ENCODE measurements at regions of chr3 and their contacts with region 1.

Region 1: GRCh38 chr3:97764407-97765238 is at the start of gene ARL6:
- DNase-seq: peak; percentile 81
- H3K4me3 Mint-ChIP-seq: peak within 1 kb of the TSS; percentile 94
- H3K27ac Mint-ChIP-seq: peak within 1 kb of the TSS; percentile 92
- H3K4me1 Mint-ChIP-seq: peaks cover 21% of the 10 kb centered on the region
- H3K27me3 Mint-ChIP-seq: no peaks in the 10 kb centered on the region
- total RNA-seq, gene ARL6: 3.0 to 4.7 TPM

Region 2: GRCh38 chr3:97389911-97390310 is 374.7 kb before region 1 on chr3:
- CTCF ChIA-PET with region 1: no interaction called
- intact Hi-C with region 1: no loop called
- DNase-seq: no peak
- H3K4me3 Mint-ChIP-seq: no peak overlapping the region
- H3K27ac Mint-ChIP-seq: no peak overlapping the region
- H3K4me1 Mint-ChIP-seq: no peaks in the 10 kb centered on the region
- H3K27me3 Mint-ChIP-seq: no peaks in the 10 kb centered on the region

Region 3: DNA sequence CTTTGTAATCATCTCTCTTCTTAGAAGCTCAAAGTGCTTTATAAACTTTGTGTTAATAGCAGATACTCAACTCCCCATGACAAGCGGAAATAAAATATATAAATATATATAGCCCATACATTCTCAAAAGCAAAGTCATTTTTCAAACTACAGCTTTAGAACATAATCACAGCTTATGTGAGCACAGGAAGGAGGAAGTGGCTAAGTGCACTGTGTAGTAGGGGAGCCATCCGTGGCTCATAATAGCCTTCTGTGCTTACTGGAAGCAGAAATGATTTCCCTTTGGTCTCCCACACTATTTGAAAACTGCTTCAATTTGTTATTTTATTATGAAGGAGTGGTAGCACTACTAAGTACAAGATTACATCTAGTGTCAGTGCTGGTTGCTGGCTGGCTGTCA is 151.5 kb before region 1 on chr3:
- CTCF ChIA-PET with region 1: no interaction called
- intact Hi-C with region 1: no loop called
- DNase-seq: no peak
- H3K4me3 Mint-ChIP-seq: no peak overlapping the region
- H3K27ac Mint-ChIP-seq: no peak overlapping the region
- H3K4me1 Mint-ChIP-seq: no peaks in the 10 kb centered on the region
- H3K27me3 Mint-ChIP-seq: peaks cover 7% of the 10 kb centered on the region

Region 4: DNA sequence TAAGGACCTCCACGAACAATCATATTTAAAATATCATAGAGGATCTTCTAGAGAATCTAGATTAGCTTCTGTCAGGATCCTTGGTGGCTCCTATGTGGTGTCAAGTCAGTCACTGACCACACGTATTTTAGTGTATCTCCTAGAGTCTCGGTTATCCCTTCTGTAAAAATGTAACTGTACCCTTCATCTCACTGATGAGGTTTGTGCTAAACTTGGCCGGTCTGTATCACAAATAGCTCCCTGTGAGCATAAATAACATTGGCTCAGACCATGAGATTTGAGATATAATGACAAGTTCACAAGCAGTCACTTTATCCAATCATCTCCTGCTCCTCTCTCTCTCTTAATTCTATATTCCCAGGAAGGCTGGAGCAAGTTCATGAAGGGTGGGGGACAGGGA is 93.7 kb before region 1 on chr3:
- CTCF ChIA-PET with region 1: no interaction called
- intact Hi-C with region 1: no loop called
- DNase-seq: no peak
- H3K4me3 Mint-ChIP-seq: no peak overlapping the region
- H3K27ac Mint-ChIP-seq: no peak overlapping the region
- H3K4me1 Mint-ChIP-seq: no peaks in the 10 kb centered on the region
- H3K27me3 Mint-ChIP-seq: peaks cover 9% of the 10 kb centered on the region

Region 5: GRCh38 chr3:97815149-97815917 is 50.7 kb after region 1 on chr3:
- CTCF ChIA-PET with region 1: no interaction called
- intact Hi-C with region 1: loop called (anchors 1 kb)
- DNase-seq: peak; percentile 77
- H3K4me3 Mint-ChIP-seq: no peak overlapping the region
- H3K27ac Mint-ChIP-seq: peak overlapping the region; percentile 66
- H3K4me1 Mint-ChIP-seq: peaks cover 13% of the 10 kb centered on the region
- H3K27me3 Mint-ChIP-seq: peaks cover 1% of the 10 kb centered on the region

Region 6: DNA sequence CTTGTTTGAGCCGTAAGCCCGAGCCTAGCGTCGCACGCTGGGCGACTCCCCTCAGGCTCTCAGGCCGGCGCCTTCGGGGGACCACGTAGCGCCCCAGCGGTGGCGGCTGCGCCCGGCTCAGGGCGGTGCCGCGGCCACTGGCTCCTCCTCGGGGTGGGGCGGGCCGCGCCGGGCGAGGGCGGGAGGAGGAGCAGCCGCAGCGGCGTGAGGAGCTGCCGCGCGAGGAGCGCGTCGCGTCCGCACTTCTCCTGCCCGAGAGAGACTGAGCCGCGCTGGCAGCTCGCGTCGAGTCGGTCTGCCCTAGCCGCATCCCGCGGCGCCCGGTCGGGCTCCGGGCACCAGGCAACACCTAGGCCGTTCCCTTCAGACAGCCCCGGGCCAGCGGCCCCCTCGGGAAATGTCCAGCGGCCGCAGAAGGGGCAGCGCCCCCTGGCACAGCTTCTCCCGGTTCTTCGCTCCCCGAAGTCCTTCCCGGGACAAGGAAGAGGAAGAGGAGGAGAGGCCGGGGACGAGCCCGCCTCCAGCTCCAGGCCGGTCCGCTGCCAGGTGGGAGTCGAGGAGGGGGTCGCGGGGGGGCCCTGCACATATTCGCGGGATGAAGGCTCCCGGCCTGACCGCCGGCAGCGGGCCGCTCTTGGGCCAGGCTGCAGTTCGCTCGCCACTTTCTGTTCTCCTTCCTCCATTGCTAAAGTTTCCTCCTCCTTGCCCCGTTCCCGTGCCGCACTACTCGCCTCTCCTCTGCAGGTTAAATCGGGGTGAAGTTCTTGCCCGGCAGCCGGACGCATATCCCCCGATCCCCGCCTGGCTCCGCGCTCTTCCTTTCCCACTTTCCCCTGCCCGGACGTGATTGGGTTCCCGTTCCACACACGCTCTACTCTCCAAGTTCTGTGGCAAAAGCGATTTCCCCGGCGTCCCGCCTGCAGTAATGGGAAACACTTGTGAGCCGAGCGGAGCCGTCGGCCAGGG is 57.5 kb after region 1 on chr3 and contains the start of gene CRYBG3:
- CTCF ChIA-PET with region 1: no interaction called
- intact Hi-C with region 1: loop called (anchors 1 kb)
- DNase-seq: peak; percentile 82
- H3K4me3 Mint-ChIP-seq: peak within 1 kb of the TSS; percentile 95
- H3K27ac Mint-ChIP-seq: peak within 1 kb of the TSS; percentile 27
- H3K4me1 Mint-ChIP-seq: peaks cover 14% of the 10 kb centered on the region
- H3K27me3 Mint-ChIP-seq: peaks cover 16% of the 10 kb centered on the region
- total RNA-seq, gene CRYBG3: 1.3 to 1.7 TPM

Region 7: GRCh38 chr3:98022978-98023820 is 258.6 kb after region 1 on chr3:
- CTCF ChIA-PET with region 1: interaction called, 8 read pairs
- intact Hi-C with region 1: loop called (anchors 1 kb)
- DNase-seq: peak; percentile 96
- H3K4me3 Mint-ChIP-seq: no peak overlapping the region
- H3K27ac Mint-ChIP-seq: no peak overlapping the region
- H3K4me1 Mint-ChIP-seq: peaks cover 5% of the 10 kb centered on the region
- H3K27me3 Mint-ChIP-seq: no peaks in the 10 kb centered on the region

Region 8: DNA sequence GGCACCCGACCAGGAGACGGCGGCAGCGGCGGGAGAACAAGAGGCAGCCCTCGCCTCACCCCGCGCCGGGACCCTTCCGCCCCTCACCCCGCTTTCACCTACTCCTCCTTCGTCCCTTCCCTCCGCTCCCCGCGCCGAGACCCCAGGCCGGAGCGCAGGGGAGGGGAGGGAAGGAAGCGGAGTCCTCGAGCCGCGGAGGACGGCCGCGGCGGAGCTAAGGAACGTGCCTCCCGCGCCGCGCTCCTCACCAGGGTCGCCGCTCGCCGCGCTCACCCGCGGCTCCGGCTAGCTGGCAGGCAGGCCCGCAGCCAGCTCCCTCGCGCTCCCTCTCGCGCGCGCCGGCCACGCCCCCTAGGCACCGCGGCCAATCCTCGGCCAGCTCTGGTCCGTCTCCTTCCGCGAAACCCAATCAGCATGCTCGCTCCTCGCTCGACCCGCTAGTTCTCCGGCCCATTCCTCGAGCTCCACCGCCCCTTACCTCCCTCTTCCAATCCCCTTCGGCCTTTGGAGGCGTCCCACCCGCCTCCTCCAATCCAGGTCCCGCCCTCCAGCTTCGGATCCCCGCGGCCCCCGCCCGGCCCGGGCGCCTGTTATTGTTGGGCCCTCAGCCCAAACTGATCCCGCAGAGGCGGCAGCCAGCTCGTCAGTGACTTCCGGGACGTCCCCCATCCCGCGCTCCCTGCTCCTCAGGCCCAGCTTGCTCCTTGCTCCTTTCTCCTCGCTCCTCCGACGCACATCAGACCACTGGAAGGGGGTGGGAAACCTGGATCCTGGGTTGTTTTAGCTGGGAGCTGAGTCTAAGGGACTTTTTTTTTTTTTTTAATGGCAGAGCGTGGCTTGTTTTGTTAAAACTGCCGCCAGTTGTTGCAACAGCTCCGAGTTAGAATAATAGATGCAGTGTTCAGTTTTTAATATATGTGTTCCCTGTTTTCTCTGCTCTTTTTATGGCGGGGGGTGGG is 1137.0 kb after region 1 on chr3 and contains the start of gene DCBLD2:
- CTCF ChIA-PET with region 1: no interaction called
- intact Hi-C with region 1: loop called (anchors 10 kb)
- DNase-seq: peak; percentile 95
- H3K4me3 Mint-ChIP-seq: peak within 1 kb of the TSS; percentile 83
- H3K27ac Mint-ChIP-seq: peak within 1 kb of the TSS; percentile 28
- H3K4me1 Mint-ChIP-seq: peaks cover 12% of the 10 kb centered on the region
- H3K27me3 Mint-ChIP-seq: peaks cover 2% of the 10 kb centered on the region
- total RNA-seq, gene DCBLD2: 1.3 to 2.1 TPM

Measured in activated naive CD4-positive, alpha-beta T cell treated with anti-CD3 and anti-CD28 coated beads for 36 hours (primary cell).